Activated CD4-positive, alpha-beta T cell treated with anti-CD3 and anti-CD28 coated beads for 36 hours (primary cell): ENCODE measurements at regions of chr11 and their contacts with region 1.

Region 1: GRCh38 chr11:18634140-18635032 is at the start of gene SPTY2D1:
- DNase-seq: peak; percentile 99
- ATAC-seq: peak; percentile 98
- H3K4me3 Mint-ChIP-seq: peak within 1 kb of the TSS; percentile 83
- H3K27ac Mint-ChIP-seq: peak within 1 kb of the TSS; percentile 95
- H3K4me1 Mint-ChIP-seq: peaks cover 21% of the 10 kb centered on the region
- H3K27me3 Mint-ChIP-seq: no peaks in the 10 kb centered on the region
- total RNA-seq, gene SPTY2D1: 17.8 to 26.4 TPM

Region 2: DNA sequence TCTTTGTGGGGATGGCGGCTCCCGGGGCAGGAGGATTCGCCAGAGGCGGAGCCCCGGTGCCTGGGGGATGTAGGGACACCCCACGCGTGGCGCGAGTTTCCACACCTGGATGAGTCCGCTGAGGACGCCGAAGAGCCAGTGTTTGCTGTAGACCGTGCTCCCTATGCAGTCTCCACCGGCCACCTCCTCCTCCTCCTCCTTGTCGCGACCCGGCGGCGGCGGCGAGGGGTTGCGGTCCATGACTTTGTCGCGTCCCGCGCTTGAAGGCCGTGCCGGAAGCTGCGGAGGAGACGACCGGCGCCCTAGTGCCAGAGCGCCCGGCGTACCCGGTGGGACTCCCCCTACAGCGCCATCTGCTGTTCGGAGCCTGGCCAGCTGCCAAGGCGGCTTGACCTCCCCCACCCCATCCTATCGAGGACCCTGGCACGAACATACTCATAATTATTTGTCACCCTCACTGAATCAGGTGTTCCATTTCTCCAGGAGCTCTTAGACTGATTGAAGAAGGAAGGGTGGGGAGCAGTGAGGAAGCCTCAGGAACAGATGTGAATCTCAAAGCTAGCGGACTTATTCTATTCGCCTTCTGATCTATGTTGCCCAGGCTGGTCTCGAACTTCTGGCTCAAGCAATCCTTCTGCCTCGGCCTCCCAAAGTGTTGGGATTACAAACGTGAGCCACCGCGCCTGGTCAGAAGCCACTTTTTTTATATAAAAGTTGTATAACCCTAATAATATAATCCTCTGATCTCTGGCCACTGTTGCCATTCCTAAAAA is 528.4 kb before region 1 on chr11 and contains the start of gene SAAL1:
- CTCF ChIA-PET with region 1: no interaction called
- POLR2A ChIA-PET with region 1: no interaction called
- intact Hi-C with region 1: loop called (anchors 1 to 10 kb)
- DNase-seq: peak; percentile 95
- ATAC-seq: peak; percentile 97
- H3K4me3 Mint-ChIP-seq: peak within 1 kb of the TSS; percentile 82
- H3K27ac Mint-ChIP-seq: peak within 1 kb of the TSS; percentile 85
- H3K4me1 Mint-ChIP-seq: peaks cover 37% of the 10 kb centered on the region
- H3K27me3 Mint-ChIP-seq: peaks cover 3% of the 10 kb centered on the region
- total RNA-seq, gene SAAL1: 37.4 to 40.9 TPM

Region 3: DNA sequence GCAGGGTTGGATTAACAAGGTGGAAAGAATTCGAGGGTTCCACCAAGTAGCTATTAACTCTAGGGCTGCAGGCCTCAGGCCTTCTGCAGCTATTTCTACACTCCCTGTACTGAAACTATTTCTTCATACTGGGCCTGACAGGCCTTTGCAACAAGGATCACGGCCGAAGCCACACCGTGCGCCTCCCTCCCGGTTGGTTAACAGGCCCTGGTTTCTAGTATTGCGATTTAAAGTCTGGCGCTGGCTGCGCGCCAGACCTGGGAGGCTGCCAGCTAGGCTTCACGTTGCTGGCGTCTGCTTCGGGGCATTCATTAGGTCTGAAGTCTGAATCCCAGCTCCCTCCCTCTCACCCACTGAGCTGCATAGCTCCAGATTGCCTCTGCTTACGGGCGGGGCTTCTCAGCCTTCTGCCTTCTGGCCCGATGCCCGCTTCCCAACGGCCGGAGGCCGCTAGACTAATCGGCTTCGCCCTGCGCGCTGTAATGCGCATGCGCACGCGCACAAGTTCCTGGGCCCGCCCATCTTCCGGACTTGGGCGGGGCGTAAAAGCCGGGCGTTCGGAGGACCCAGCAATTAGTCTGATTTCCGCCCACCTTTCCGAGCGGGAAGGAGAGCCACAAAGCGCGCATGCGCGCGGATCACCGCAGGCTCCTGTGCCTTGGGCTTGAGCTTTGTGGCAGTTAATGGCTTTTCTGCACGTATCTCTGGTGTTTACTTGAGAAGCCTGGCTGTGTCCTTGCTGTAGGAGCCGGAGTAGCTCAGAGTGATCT is 238.5 kb before region 1 on chr11:
- CTCF ChIA-PET with region 1: no interaction called
- POLR2A ChIA-PET with region 1: interaction called, 3 read pairs
- intact Hi-C with region 1: loop called (anchors 1 to 5 kb)
- DNase-seq: peak; percentile 96
- ATAC-seq: peak; percentile 65
- H3K4me3 Mint-ChIP-seq: peak overlapping the region; percentile 97
- H3K27ac Mint-ChIP-seq: peak overlapping the region; percentile 99
- H3K4me1 Mint-ChIP-seq: peaks cover 65% of the 10 kb centered on the region
- H3K27me3 Mint-ChIP-seq: no peaks in the 10 kb centered on the region

Region 4: DNA sequence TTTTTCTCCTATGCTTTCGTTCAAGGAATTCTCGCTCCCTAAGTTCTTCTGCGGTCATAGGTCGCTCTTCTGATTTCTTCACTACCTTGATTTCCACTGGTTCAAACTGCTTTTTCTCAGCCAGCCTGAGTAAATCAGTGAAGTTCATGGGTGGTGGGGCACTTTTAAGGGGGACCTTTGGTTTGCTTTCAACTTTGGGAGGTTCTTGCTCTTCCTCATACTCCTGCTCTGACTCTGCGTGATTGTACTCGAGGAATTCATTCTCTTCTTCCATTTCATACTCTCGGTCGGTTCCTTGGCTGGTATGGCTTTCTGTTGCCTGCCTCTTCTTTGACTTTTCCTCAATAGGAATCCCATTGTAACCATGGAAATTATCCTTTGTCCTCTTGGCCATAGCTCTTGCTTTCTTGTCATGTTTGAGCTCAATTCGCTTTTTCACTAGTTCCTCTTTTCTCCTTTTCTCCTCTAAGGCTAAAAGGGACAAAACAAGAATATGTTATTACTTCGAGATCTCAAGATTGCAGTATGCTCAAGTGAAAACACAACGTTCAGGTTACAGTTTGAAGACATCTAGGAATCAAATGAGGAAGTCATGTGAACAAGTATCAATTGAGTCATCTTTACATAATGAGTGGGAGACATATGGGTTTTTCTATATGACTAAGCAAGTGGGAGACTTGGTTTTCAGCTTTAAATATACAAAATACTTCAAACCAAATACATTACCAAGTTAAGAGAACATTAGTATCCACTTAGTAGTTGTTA is 18.6 kb before region 1 on chr11:
- CTCF ChIA-PET with region 1: interaction called, 20 read pairs
- POLR2A ChIA-PET with region 1: interaction called, 15 read pairs
- intact Hi-C with region 1: loop called (anchors 1 kb)
- DNase-seq: no peak
- ATAC-seq: peak; percentile 83
- H3K4me3 Mint-ChIP-seq: peak overlapping the region; percentile 13
- H3K27ac Mint-ChIP-seq: peak overlapping the region; percentile 91
- H3K4me1 Mint-ChIP-seq: peaks cover 48% of the 10 kb centered on the region
- H3K27me3 Mint-ChIP-seq: no peaks in the 10 kb centered on the region

Region 5: DNA sequence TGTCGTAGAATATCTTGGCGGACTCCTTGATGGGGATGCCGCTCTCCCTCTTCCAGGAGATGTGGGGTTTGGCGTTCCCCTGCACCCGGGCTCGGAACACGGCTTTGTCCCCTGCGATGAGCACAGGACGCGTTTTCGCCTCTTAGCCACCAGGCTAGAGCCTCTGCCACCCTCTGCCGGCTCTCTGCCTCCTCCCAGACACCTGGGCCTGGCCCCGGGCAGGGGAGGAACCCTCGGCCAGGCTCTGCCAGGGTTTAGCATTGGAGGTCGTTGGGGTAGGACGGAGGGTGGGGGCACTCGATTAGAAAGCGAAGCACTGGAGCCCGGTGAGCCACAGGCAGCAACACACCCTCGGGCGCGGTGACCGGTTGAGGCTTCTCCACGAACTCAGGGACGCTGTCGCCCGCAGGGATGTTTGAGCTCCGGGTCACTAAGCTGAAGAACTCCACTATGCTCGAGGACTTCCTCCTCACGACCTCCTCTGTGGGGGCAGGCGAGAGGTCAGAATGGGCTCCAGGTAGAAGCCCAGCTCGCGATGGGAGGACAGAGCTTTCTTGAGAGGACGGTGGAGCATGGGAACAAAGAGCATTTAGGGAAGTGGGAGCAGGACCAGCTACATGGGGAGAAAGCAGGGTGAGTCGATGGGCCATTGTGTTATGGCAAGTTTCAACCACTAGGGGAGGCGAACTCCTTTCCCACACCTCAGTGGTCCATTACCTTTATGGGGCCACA is 87.3 kb after region 1 on chr11:
- CTCF ChIA-PET with region 1: interaction called, 4 read pairs
- POLR2A ChIA-PET with region 1: no interaction called
- intact Hi-C with region 1: loop called in 1 of 2 experiments (anchors 1 kb)
- DNase-seq: peak; percentile 72
- ATAC-seq: peak; percentile 68
- H3K4me3 Mint-ChIP-seq: peak overlapping the region; percentile 78
- H3K27ac Mint-ChIP-seq: no peak overlapping the region
- H3K4me1 Mint-ChIP-seq: peaks cover 5% of the 10 kb centered on the region
- H3K27me3 Mint-ChIP-seq: no peaks in the 10 kb centered on the region